Posterior cingulate gyrus (tissue), 11 donors: ENCODE measurements at regions of chr15 and their contacts with region 1.

Region 1: DNA sequence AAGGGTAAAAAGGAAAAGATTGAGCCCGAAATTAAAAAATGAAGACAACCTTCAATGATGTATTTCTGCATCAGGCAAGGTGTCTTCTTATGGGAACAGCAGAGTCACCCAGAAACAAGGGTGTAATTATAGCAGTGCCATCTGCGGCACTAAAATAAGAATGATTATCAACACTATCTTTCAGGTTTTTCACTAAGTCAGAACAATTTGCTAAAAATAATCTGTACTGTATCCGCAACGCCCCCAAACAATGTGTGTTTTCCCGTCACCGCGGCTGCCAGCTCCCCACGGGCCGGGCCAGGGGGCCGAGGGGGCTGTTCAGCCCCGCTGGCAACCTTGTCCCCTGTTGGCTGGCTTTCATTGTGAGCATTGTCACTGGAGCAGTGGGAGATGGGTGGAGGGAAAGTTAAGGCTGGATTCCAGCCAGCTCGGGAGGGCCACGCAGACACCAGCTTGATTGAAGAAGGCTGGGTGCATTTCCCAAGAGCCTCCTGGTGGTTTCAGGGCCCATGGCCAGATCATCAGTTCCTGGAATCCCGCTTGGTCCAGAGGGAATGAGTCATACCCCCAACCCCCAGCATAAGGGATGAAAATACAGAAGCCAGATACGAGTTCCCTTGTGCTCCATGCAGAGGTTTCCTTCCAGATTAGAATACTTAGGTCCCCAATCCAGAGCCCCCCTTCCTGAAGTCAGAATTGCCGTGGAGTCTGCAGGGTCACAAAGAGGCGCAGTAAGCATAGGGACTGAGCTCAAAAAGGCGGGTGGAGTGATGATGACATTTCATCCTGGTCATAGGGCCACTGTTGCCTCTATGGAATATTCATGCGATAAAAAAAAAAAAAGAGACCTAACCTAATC is 90.2 kb upstream of the KLF13 start:
- DNase-seq: peak; percentile 46 to 95 (median 70)

Region 2: GRCh38 chr15:31157644-31158091 is 78.7 kb before region 1 on chr15:
- intact Hi-C with region 1: no loop called
- DNase-seq: peak in 1 of 10 donors; percentile 44

Region 3: DNA sequence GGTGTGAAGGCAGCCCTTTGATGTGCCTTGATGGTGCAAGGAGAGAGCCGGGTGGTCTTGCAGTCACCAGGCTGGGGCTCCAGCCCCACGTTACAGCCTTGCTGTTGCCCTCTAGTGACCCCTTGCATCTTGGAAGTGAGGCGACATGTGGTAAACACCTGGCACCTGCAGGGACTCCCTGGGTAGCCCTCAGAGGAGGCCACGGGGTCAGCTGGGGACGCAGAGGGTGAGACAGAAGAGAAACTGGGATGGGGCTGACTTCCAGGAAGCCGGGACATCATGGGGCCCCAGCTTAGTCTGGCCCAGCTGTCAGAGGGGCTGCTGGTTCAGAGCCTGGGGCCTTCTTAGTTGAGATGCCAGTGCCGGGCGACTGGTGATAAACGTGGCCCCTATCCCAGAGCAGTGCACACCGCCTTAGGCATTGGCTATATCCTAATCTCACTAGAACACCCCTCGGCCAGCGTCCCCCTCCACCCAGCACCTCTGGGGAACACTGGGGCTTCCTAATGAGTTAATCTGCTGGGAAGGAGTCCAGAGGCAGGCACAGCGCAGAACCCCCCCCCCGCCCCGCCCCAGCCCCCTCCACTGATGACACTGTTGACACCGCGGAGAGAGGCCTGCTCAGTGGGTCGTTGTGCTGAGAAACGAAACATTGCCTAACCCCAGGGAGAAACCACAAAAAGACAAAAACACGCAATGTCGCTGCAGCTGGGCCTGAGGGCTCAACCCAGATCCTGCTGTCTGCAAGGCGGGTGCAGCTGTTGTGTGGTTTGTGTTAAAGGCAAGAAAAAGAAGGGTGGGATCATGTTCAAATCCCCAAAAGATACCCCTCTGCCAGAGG is 29.7 kb after region 1 on chr15:
- intact Hi-C with region 1: no loop called
- DNase-seq: peak in 4 of 10 donors; percentile 20 to 85 (median 64)

Region 4: GRCh38 chr15:31296646-31297574 is 60.5 kb after region 1 on chr15:
- intact Hi-C with region 1: loop called (anchors 5 kb)
- DNase-seq: peak in 2 of 10 donors; percentile 48 to 87

Region 5: GRCh38 chr15:31326156-31326732 is 89.8 kb after region 1 on chr15:
- intact Hi-C with region 1: loop called (anchors 5 kb)
- DNase-seq: peak; percentile 97 to 100 (median 98)